ENCODE measurements at regions of chr2 and their contacts with region 1.

Region 1: DNA sequence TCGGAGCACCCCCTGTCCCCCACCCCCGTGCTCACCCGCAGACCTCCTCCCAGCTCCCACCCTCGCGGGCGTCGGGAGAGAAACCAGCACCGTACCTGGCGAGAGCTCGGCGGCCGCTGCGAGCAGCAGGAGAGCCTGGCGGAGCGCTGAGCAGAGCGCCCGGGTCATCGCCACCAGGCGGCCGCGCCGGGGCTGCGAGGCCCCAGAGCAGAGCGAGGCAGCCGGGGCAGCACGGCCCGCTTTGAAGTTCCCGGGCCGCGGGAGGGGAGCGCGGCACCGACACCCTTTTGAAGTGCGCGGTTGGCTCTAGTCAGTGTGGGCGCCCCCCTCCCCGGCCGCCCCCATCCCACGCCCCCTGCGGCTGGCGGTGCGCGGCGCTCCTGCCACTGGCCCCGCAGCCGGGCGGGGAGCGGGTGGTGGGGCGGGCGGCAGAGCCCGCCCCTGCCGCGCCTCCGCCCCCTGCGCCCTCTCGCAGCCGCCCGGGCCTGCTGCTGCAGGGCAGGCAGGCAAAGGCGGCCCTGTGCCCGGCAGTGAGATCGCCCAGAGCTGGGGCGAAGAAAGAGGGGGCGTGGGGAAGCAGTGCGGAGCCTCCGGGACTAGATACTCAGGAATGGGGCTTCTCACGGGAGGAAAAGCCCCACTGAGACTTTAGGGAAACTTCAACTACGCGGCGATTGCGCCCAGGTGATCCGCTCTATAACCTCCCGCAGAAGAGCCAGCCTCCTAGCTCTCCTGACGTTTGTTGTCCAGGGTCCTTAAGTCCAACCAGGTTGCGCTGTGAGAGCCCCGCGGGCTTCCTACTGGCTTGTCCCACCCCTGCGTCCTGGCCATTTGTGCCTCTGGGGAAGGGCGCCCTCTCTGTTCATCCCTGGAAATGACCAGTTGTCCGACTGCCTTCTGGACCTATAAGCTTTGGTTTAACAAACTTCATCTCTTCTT is at the start of gene ACVR1C:
- DNase-seq: peak; percentile 25 to 83 (median 75)
- H3K4me3 ChIP-seq: peak within 1 kb of the TSS; percentile 49 to 91 (median 75)
- H3K27ac ChIP-seq: peak within 1 kb of the TSS in 58 of 59 donors; percentile 54 to 98 (median 92)
- H3K27me3 ChIP-seq: no peaks in the 10 kb centered on the region
- CTCF ChIP-seq: peak in 55 of 56 donors; percentile 47 to 83 (median 68)
- total RNA-seq, gene ACVR1C: 5.3 to 20.6 (median 11.5) TPM

Region 2: GRCh38 chr2:157336137-157337010 is 292.4 kb before region 1 on chr2:
- intact Hi-C with region 1: loop called in 1 of 2 experiments (anchors 10 kb)
- DNase-seq: peak in 4 of 10 donors; percentile 15 to 44 (median 26)
- H3K4me3 ChIP-seq: peak overlapping the region in 5 of 59 donors; percentile 10 to 39 (median 18)
- H3K27ac ChIP-seq: peak overlapping the region in 5 of 59 donors; percentile 7 to 83 (median 75)
- H3K27me3 ChIP-seq: peaks cover 0 to 6% (median 0%) of the 10 kb centered on the region in 45 donors
- CTCF ChIP-seq: peak; percentile 50 to 87 (median 72)